Endothelial cell of umbilical vein (primary cell): ENCODE measurements at regions of chr14 and their contacts with region 1.

Region 1: DNA sequence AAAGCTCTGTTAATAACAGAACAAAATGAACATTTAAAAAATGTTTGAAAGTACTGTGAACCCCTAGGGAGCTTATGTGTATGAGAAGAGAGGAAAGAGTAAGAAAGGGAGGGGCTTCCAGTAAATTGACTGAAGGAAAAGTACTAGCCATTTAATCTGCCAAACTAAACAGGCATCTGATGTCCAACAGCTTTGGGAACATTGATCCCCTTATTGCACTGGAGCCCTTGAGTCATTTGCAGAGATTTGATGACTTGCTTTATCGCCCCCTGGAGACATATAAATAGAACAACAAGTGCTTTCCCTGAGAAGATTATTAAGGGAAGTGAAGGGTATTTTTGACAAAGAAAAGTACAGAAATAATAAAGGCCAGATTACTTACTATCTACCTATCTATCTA is 319.3 kb upstream of the NOVA1 start:
- DNase-seq: peak; percentile 28
- H3K4me3 ChIP-seq: no peak overlapping the region
- H3K27ac ChIP-seq: no peak overlapping the region
- H3K4me1 ChIP-seq: no peaks in the 10 kb centered on the region
- H3K27me3 ChIP-seq: peaks cover 0 to 1% of the 10 kb centered on the region in 2 experiments
- CTCF ChIP-seq: peak; percentile 30 to 48
- POLR2A ChIP-seq: no peak

Region 2: GRCh38 chr14:26394150-26394810 is 522.8 kb before region 1 on chr14:
- CTCF ChIA-PET with region 1: interaction called, 21 read pairs
- POLR2A ChIA-PET with region 1: no interaction called
- dilution Hi-C with region 1: no loop called
- intact Hi-C with region 1: loop called (anchors 5 kb)
- DNase-seq: peak; percentile 19
- H3K4me3 ChIP-seq: no peak overlapping the region
- H3K27ac ChIP-seq: no peak overlapping the region
- H3K4me1 ChIP-seq: no peaks in the 10 kb centered on the region
- H3K27me3 ChIP-seq: peaks cover 0 to 2% of the 10 kb centered on the region in 2 experiments
- CTCF ChIP-seq: peak in 1 of 2 donors; percentile 23
- POLR2A ChIP-seq: no peak

Region 3: GRCh38 chr14:26930576-26930975 is 13.5 kb after region 1 on chr14:
- CTCF ChIA-PET with region 1: interaction called, 14 read pairs
- POLR2A ChIA-PET with region 1: no interaction called
- dilution Hi-C with region 1: no loop called
- intact Hi-C with region 1: no loop called
- DNase-seq: no peak
- H3K4me3 ChIP-seq: no peak overlapping the region
- H3K27ac ChIP-seq: no peak overlapping the region
- H3K4me1 ChIP-seq: no peaks in the 10 kb centered on the region
- H3K27me3 ChIP-seq: peaks cover 0 to 5% of the 10 kb centered on the region in 2 experiments
- CTCF ChIP-seq: no peak
- POLR2A ChIP-seq: no peak